ENCODE measurements at regions of chr7 and their contacts with region 1.

Region 1: GRCh38 chr7:70654979-70655378 is 477.0 kb upstream of the GALNT17 start:
- DNase-seq: no peak
- ATAC-seq: no peak

Region 2: GRCh38 chr7:71131256-71132126 is 476.5 kb after region 1 on chr7:
- intact Hi-C with region 1: loop called in 1 of 2 experiments (anchors 10 kb)
- DNase-seq: peak; percentile 9 to 37
- ATAC-seq: no peak

Measured in left colon (tissue), 2 donors.